A673 (cell line): ENCODE measurements at regions of chr3 and their contacts with region 1.

Region 1: GRCh38 chr3:151580591-151580990 is 119.7 kb upstream of the IGSF10 start:
- DNase-seq: peak; percentile 94
- H3K4me3 ChIP-seq: peak overlapping the region; percentile 11
- H3K27ac ChIP-seq: peak overlapping the region; percentile 93
- H3K4me1 ChIP-seq: peaks cover 31% of the 10 kb centered on the region
- H3K27me3 ChIP-seq: no peaks in the 10 kb centered on the region
- CTCF ChIP-seq: no peak

Region 2: DNA sequence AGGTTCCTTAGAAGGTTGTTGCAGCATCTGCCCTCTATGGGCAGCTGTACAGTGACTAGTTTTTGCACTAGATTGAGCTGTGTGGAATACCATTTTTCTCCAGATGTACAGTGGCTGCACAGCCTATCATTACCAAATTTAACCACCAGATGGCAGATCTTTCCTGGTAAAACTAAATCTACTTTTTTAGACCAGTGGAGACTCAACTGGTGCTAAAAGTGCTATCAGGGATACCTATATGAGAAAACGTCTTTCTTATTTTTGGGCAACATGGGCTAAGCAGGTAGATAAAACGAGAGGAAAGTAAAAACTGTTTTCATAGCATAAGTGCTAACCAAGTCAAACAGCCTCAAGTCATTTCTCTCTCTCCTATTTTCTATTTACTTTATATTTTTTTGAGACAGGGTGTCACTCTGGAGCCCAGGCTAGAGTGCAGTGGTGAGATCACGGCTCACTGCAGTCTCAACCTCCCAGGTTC is 140.9 kb before region 1 on chr3:
- CTCF ChIA-PET with region 1: no interaction called
- POLR2A ChIA-PET with region 1: no interaction called
- intact Hi-C with region 1: loop called (anchors 2 kb)
- DNase-seq: peak; percentile 90
- H3K4me3 ChIP-seq: no peak overlapping the region
- H3K27ac ChIP-seq: peak overlapping the region; percentile 34
- H3K4me1 ChIP-seq: peaks cover 22% of the 10 kb centered on the region
- H3K27me3 ChIP-seq: no peaks in the 10 kb centered on the region
- CTCF ChIP-seq: peak; percentile 77

Region 3: GRCh38 chr3:151538456-151539393 is 41.9 kb before region 1 on chr3:
- CTCF ChIA-PET with region 1: no interaction called
- POLR2A ChIA-PET with region 1: no interaction called
- intact Hi-C with region 1: no loop called
- DNase-seq: no peak
- H3K4me3 ChIP-seq: no peak overlapping the region
- H3K27ac ChIP-seq: no peak overlapping the region
- H3K4me1 ChIP-seq: peaks cover 9% of the 10 kb centered on the region
- H3K27me3 ChIP-seq: no peaks in the 10 kb centered on the region
- CTCF ChIP-seq: no peak

Region 4: GRCh38 chr3:151560738-151561137 is 19.9 kb before region 1 on chr3:
- CTCF ChIA-PET with region 1: interaction called, 14 read pairs
- POLR2A ChIA-PET with region 1: interaction called, 5 read pairs
- intact Hi-C with region 1: loop called (anchors 2 kb)
- DNase-seq: no peak
- H3K4me3 ChIP-seq: no peak overlapping the region
- H3K27ac ChIP-seq: peak overlapping the region; percentile 21
- H3K4me1 ChIP-seq: peaks cover 65% of the 10 kb centered on the region
- H3K27me3 ChIP-seq: no peaks in the 10 kb centered on the region
- CTCF ChIP-seq: no peak

Region 5: GRCh38 chr3:151660885-151661284 is 80.3 kb after region 1 on chr3:
- CTCF ChIA-PET with region 1: no interaction called
- POLR2A ChIA-PET with region 1: no interaction called
- intact Hi-C with region 1: loop called (anchors 2 kb)
- DNase-seq: peak; percentile 67
- H3K4me3 ChIP-seq: no peak overlapping the region
- H3K27ac ChIP-seq: peak overlapping the region; percentile 10
- H3K4me1 ChIP-seq: peaks cover 82% of the 10 kb centered on the region
- H3K27me3 ChIP-seq: no peaks in the 10 kb centered on the region
- CTCF ChIP-seq: peak; percentile 50; the same call in 1 of the 2 replicates

Region 6: GRCh38 chr3:151770956-151771355 is 190.4 kb after region 1 on chr3:
- CTCF ChIA-PET with region 1: no interaction called
- POLR2A ChIA-PET with region 1: no interaction called
- intact Hi-C with region 1: loop called (anchors 2 kb)
- DNase-seq: no peak
- H3K4me3 ChIP-seq: no peak overlapping the region
- H3K27ac ChIP-seq: peak overlapping the region; percentile 83
- H3K4me1 ChIP-seq: peaks cover 62% of the 10 kb centered on the region
- H3K27me3 ChIP-seq: no peaks in the 10 kb centered on the region
- CTCF ChIP-seq: no peak

Region 7: DNA sequence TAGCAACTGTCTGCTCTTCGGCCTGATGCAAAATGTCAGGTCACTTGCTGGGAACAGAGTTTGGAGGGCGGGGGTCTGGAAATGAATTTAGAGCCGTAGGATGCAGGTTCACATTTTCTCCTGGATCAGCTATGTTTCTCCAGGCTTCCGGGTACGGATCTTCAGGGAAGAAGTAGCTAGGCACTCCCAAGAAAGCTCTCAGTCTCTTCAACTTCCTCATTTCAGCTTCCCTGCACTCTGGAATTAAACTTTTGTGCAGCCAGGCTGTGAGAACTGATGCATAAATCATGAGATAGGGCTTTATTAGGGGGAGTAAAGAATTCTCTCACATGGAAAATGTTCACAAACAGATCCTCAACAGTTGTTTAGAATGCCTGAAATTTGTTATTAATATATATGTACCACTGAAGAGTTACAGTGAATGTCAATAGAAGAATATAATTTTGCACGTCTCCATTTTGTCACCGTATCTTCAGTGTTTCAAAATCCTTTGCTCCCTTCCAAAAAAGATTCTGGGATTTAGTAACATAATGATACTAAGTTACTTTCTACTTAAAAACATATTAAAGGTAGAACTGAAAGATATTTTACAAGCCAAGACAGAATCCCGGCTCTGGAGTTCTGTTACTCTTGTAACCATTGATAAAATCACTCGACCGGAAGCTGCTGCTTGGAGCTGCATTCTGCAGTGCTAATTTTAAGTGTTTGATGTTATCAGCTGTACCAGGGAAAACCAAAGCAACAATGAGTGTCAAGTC is 1075.8 kb after region 1 on chr3:
- CTCF ChIA-PET with region 1: no interaction called
- POLR2A ChIA-PET with region 1: interaction called, 15 read pairs
- intact Hi-C with region 1: no loop called
- DNase-seq: peak; percentile 60
- H3K4me3 ChIP-seq: no peak overlapping the region
- H3K27ac ChIP-seq: peak overlapping the region; percentile 54
- H3K4me1 ChIP-seq: peaks cover 25% of the 10 kb centered on the region
- H3K27me3 ChIP-seq: no peaks in the 10 kb centered on the region
- CTCF ChIP-seq: no peak

Region 8: GRCh38 chr3:152729906-152730305 is 1149.3 kb after region 1 on chr3:
- CTCF ChIA-PET with region 1: no interaction called
- POLR2A ChIA-PET with region 1: interaction called, 27 read pairs
- intact Hi-C with region 1: no loop called
- DNase-seq: peak; percentile 68
- H3K4me3 ChIP-seq: no peak overlapping the region
- H3K27ac ChIP-seq: peak overlapping the region; percentile 83
- H3K4me1 ChIP-seq: peaks cover 40% of the 10 kb centered on the region
- H3K27me3 ChIP-seq: no peaks in the 10 kb centered on the region
- CTCF ChIP-seq: no peak